PC-3 (cell line): ENCODE measurements at regions of chr5 and their contacts with region 1.

Region 1: GRCh38 chr5:75457685-75458084 is 53.7 kb downstream of the CERT1 start:
- DNase-seq: peak; percentile 29
- ATAC-seq: no peak
- H3K4me3 ChIP-seq: no peak overlapping the region
- H3K27ac ChIP-seq: no peak overlapping the region
- H3K4me1 ChIP-seq: peaks cover 8% of the 10 kb centered on the region
- H3K27me3 ChIP-seq: no peaks in the 10 kb centered on the region
- CTCF ChIP-seq: no peak

Region 2: DNA sequence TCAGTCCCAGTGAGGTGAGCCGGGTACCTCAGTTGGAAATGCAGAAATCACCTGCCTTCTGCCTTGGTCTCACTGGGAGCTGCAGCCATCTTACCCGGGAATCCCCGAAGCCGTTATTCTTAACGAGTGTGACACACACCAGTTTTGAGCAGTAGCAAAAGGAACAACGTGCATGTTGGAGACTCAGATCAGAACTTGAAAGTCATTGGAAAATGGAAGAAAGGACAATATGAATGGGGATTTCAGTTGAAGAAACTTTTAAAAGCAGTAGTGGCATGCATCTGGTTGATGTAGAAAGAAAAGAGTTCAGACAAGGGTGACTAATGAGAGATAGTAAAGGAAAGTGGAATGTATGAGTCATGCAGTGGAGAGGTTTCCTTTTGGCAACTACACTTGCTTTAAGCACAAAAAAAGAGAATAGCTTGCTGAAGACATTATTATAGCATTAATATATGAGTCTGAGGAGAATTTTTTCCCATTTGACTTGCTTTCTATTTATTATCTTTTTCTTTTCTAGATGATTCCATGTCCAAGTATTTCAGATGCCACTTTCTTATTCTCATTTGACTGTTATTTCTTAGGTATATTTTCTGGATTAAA is 109.1 kb after region 1 on chr5:
- CTCF ChIA-PET with region 1: no interaction called
- POLR2A ChIA-PET with region 1: interaction called, 12 read pairs
- intact Hi-C with region 1: no loop called
- DNase-seq: peak; percentile 88
- ATAC-seq: peak; percentile 66
- H3K4me3 ChIP-seq: peak overlapping the region; percentile 39
- H3K27ac ChIP-seq: peak overlapping the region; percentile 99
- H3K4me1 ChIP-seq: peaks cover 42% of the 10 kb centered on the region
- H3K27me3 ChIP-seq: no peaks in the 10 kb centered on the region
- CTCF ChIP-seq: no peak